Left lung (tissue), 14 donors: ENCODE measurements at regions of chr17 and their contacts with region 1.

Region 1: DNA sequence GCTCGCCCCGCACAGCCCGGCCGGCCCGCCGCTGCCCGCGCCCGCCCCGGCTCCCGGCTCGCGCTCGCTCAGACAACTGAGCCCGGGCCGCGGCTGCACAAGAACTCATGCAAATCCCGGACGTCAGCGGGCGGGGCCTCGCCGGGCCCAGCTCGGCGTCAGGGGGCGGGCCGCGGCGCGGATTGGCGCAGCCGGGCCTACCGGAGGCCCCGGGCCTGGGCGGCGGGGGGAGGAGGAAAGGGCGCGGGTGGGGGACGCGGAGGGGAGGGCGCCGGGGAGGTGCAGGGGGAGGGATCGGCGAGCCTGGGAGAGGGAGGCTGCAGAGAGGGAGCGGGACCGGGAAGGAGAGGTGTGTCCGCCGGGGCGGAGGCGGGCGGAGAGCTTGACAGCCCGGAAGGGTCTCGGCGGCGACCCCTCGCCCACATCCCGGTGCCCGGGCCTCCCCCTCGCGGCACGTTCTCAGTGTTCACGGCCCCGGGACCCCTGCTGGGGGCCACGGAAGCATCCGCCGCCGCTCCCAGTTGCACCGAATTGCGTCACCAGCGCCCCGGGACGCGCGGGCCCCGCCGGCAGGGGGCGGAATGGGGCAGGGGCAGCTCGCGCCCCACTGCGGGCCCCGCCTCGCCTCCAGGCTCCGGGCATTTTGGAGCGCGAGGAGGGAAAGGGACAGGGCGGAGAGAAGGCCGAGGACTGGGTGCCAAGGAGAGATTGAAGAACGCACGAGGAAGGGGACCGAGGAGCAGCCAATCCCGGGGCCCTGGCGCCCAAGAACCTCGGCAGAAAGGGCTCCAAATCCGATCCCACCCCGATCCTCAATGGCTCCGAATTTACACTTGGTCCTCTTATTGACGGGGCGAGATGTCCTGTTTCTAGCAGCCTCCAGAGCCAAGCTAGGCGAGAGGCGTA is at the start of gene CBX4:
- DNase-seq: peak; percentile 87 to 99 (median 96)
- ATAC-seq: peak; percentile 70
- H3K4me3 ChIP-seq: peak within 1 kb of the TSS; percentile 70 to 74
- H3K27ac ChIP-seq: peak within 1 kb of the TSS; percentile 91 to 92
- H3K4me1 ChIP-seq: peaks cover 47 to 84% of the 10 kb centered on the region in 2 donors
- H3K27me3 ChIP-seq: peaks cover 36 to 51% of the 10 kb centered on the region in 2 donors
- CTCF ChIP-seq: peak; percentile 57 to 79
- polyA plus RNA-seq, gene CBX4: 11.1 to 20.7 (median 14.2) TPM

Region 2: DNA sequence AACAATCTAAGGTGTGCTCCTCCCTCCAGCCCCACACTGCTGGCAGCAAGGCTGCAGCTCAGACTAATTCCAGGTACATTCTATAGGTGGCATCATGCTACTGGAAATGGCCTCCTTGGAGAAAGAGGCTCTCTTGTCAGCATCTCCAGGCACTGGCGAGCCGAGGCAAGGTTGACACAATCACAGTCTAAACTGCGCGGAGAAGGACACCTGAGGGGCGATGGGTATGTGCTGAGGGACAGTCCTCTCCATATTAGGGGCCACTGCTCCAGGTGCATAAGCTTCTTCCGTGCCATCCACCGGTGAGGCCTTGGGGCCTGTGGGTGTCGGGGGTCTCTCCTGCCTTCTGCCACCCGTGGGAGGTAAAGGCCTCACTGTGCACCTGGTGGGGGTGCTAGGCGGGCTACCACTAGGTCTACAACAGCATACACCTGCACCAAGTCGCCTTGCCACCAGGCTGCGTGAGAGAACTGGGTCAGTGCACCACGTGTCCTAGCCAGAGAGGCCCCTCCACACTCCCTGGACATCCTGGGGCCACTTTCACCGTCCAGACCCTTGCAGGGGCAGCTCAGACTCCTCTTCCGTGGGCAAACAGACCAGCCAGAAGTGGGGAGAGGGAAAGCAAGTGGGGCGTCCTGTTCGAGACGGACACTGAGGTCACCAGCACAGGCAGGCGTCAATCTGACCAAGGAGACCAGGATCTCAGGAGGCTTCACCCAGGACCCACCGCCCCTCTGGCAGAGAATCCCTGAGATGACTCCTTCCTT is 30.7 kb before region 1 on chr17:
- intact Hi-C with region 1: loop called in 1 of 2 experiments (anchors 5 kb)
- DNase-seq: no peak
- ATAC-seq: peak; percentile 79
- H3K4me3 ChIP-seq: no peak overlapping the region
- H3K27ac ChIP-seq: no peak overlapping the region
- H3K4me1 ChIP-seq: peaks cover 24 to 54% of the 10 kb centered on the region in 2 donors
- H3K27me3 ChIP-seq: peaks cover 85 to 100% of the 10 kb centered on the region in 2 donors
- CTCF ChIP-seq: peak; percentile 14 to 20